ENCODE measurements at regions of chr18 and their contacts with region 1.

Region 1: GRCh38 chr18:36284671-36285295 is 12.7 kb upstream of the FHOD3 start:
- DNase-seq: no peak
- H3K4me3 ChIP-seq: no peak overlapping the region
- H3K27ac ChIP-seq: no peak overlapping the region
- H3K4me1 ChIP-seq: no peaks in the 10 kb centered on the region
- H3K27me3 ChIP-seq: peaks cover 0 to 38% (median 0%) of the 10 kb centered on the region in 4 donors
- CTCF ChIP-seq: peak; percentile 72 to 91 (median 86)
- POLR2A ChIP-seq: no peak

Region 2: GRCh38 chr18:36015629-36016028 is 269.2 kb before region 1 on chr18:
- intact Hi-C with region 1: loop called (anchors 10 kb)
- DNase-seq: no peak
- H3K4me3 ChIP-seq: no peak overlapping the region
- H3K27ac ChIP-seq: no peak overlapping the region
- H3K4me1 ChIP-seq: no peaks in the 10 kb centered on the region
- H3K27me3 ChIP-seq: no peaks in the 10 kb centered on the region
- CTCF ChIP-seq: no peak
- POLR2A ChIP-seq: no peak

Region 3: GRCh38 chr18:36101943-36102342 is 182.8 kb before region 1 on chr18:
- intact Hi-C with region 1: loop called (anchors 5 kb)
- DNase-seq: no peak
- H3K4me3 ChIP-seq: no peak overlapping the region
- H3K27ac ChIP-seq: no peak overlapping the region
- H3K4me1 ChIP-seq: no peaks in the 10 kb centered on the region
- H3K27me3 ChIP-seq: peaks cover 0 to 8% (median 0%) of the 10 kb centered on the region in 4 donors
- CTCF ChIP-seq: no peak
- POLR2A ChIP-seq: no peak

Measured in esophagus squamous epithelium (tissue), 5 donors.